OCI-LY7 (cell line): ENCODE measurements at regions of chr6 and their contacts with region 1.

Region 1: DNA sequence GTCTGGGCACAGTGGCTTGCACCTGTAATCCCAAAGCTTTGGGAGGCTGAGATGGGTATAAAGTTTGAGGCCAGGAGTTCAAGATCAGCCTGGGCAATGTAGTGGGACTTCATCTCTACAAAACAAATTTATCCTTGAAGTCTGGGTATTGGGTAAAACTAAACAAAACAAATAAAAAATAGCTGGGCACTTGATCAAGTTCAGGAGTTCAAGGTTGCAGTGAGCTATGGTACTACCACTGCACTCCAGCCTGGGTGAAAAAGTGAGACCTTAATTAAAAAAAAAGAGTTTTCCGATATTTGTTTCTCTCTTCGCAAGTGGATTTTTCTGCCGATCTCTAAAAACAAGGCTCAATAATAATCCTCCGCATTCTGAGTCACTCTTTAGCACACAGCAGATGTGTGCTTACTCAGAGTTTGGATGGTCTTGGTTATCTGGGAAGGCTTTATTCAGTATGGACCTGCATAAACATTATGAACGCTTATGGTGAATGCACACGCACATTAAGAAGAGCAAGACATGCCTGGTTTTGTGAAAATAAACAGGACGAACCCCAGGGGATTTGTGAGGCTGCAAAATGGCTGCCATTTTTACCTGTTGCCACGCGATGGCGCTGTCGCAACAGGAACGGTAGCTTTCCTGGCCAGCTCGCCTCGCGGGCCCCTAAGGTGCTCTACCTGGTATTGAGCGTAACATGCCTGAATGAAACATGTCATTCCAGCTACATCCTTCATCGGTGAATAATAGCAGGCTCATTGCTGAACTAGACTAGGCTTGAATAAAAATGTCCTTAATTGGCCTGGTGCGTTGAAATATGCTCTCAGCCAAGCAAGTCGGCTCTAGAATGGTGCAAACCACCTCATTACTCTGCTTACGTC is 6.0 kb downstream of the OPN5 start:
- DNase-seq: peak; percentile 73
- H3K4me3 ChIP-seq: no peak overlapping the region
- H3K27ac ChIP-seq: no peak overlapping the region
- H3K4me1 ChIP-seq: no peaks in the 10 kb centered on the region
- CTCF ChIP-seq: peak; percentile 95

Region 2: GRCh38 chr6:47309291-47310130 is 478.3 kb before region 1 on chr6 and contains the start of gene TNFRSF21:
- CTCF ChIA-PET with region 1: no interaction called
- POLR2A ChIA-PET with region 1: no interaction called
- intact Hi-C with region 1: loop called (anchors 10 kb)
- DNase-seq: peak; percentile 93
- H3K4me3 ChIP-seq: peak within 1 kb of the TSS; percentile 95
- H3K27ac ChIP-seq: peak within 1 kb of the TSS; percentile 62
- H3K4me1 ChIP-seq: peaks cover 46% of the 10 kb centered on the region
- CTCF ChIP-seq: peak; percentile 86
- total RNA-seq, gene TNFRSF21: 22.7 and 28.1 TPM in 2 replicates

Region 3: GRCh38 chr6:47844881-47845280 is 57.0 kb after region 1 on chr6:
- CTCF ChIA-PET with region 1: no interaction called
- POLR2A ChIA-PET with region 1: no interaction called
- intact Hi-C with region 1: loop called (anchors 5 kb)
- DNase-seq: no peak
- H3K4me3 ChIP-seq: no peak overlapping the region
- H3K27ac ChIP-seq: no peak overlapping the region
- H3K4me1 ChIP-seq: no peaks in the 10 kb centered on the region
- CTCF ChIP-seq: no peak

Region 4: GRCh38 chr6:48765352-48765961 is 977.6 kb after region 1 on chr6:
- CTCF ChIA-PET with region 1: no interaction called
- POLR2A ChIA-PET with region 1: no interaction called
- intact Hi-C with region 1: loop called (anchors 2 kb)
- DNase-seq: peak; percentile 31
- H3K4me3 ChIP-seq: no peak overlapping the region
- H3K27ac ChIP-seq: no peak overlapping the region
- H3K4me1 ChIP-seq: no peaks in the 10 kb centered on the region
- CTCF ChIP-seq: peak; percentile 73

Region 5: GRCh38 chr6:49409951-49410542 is 1622.2 kb after region 1 on chr6:
- CTCF ChIA-PET with region 1: no interaction called
- POLR2A ChIA-PET with region 1: no interaction called
- intact Hi-C with region 1: loop called (anchors 2 kb)
- DNase-seq: peak; percentile 57
- H3K4me3 ChIP-seq: no peak overlapping the region
- H3K27ac ChIP-seq: no peak overlapping the region
- H3K4me1 ChIP-seq: no peaks in the 10 kb centered on the region
- CTCF ChIP-seq: peak; percentile 87